Caco-2 (cell line): ENCODE measurements at regions of chr14 and their contacts with region 1.

Region 1: GRCh38 chr14:46581036-46581671 is 70.4 kb downstream of the RPL10L start:
- DNase-seq: peak; percentile 36 to 46
- H3K4me3 ChIP-seq: no peak overlapping the region
- H3K4me3 Mint-ChIP-seq: no peak overlapping the region
- H3K27ac Mint-ChIP-seq: no peak overlapping the region
- H3K4me1 ChIP-seq: no peaks in the 10 kb centered on the region
- H3K4me1 Mint-ChIP-seq: no peaks in the 10 kb centered on the region
- H3K27me3 ChIP-seq: no peaks in the 10 kb centered on the region
- H3K27me3 Mint-ChIP-seq: no peaks in the 10 kb centered on the region
- CTCF ChIP-seq: peak; percentile 67 to 70

Region 2: DNA sequence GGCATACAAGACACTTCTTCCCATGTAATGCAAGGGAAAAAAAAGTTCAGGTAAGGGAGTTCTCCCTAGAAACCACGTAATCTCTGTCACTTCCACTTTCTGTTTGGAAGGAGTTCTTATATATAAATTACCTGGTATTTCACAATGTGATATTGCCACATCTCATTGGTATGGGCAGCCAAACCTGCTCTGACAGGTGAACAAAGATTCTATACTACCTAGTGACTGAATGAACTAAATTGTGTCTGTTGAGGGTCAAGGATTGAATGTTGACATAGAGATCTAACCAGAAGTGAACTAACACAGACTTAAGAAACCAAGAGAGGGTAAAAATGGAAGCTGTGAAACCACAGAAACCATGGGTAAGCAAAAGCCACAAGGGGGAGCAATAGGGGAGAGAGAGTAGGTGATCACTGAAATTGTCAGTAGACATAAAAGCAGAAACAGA is 90.9 kb before region 1 on chr14:
- CTCF ChIA-PET with region 1: no interaction called
- POLR2A ChIA-PET with region 1: no interaction called
- intact Hi-C with region 1: loop called (anchors 5 kb)
- DNase-seq: peak in 1 of 2 experiments; percentile 50
- H3K4me3 ChIP-seq: no peak overlapping the region
- H3K4me3 Mint-ChIP-seq: no peak overlapping the region
- H3K27ac Mint-ChIP-seq: no peak overlapping the region
- H3K4me1 ChIP-seq: no peaks in the 10 kb centered on the region
- H3K4me1 Mint-ChIP-seq: peaks cover 9% of the 10 kb centered on the region
- H3K27me3 ChIP-seq: no peaks in the 10 kb centered on the region
- H3K27me3 Mint-ChIP-seq: no peaks in the 10 kb centered on the region
- CTCF ChIP-seq: peak; percentile 38 to 56

Region 3: GRCh38 chr14:46596236-46596635 is 15.1 kb after region 1 on chr14:
- CTCF ChIA-PET with region 1: no interaction called
- POLR2A ChIA-PET with region 1: no interaction called
- intact Hi-C with region 1: no loop called
- DNase-seq: no peak
- H3K4me3 ChIP-seq: no peak overlapping the region
- H3K4me3 Mint-ChIP-seq: no peak overlapping the region
- H3K27ac Mint-ChIP-seq: no peak overlapping the region
- H3K4me1 ChIP-seq: peaks cover 12% of the 10 kb centered on the region
- H3K4me1 Mint-ChIP-seq: peaks cover 9% of the 10 kb centered on the region
- H3K27me3 ChIP-seq: no peaks in the 10 kb centered on the region
- H3K27me3 Mint-ChIP-seq: peaks cover 3% of the 10 kb centered on the region
- CTCF ChIP-seq: no peak

Region 4: DNA sequence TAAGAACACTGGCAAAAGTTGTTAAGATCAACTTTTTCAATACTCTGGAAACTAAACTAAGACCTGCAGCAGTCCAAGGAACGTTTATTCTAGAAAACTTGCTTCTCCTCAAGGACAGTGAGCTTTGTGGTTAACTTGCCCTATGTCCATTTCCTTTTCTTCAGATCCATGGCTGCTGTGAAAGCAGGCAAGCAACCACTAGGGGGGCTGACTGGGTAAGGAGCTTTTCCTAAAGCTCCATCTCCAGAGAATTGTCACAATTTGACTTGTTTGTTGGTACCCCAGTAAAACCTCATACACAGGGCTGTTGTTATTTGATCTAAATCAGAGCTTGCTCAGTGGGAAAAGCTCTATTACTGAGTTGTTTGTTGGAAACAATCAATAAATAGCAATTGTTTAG is 80.6 kb after region 1 on chr14:
- CTCF ChIA-PET with region 1: no interaction called
- POLR2A ChIA-PET with region 1: no interaction called
- intact Hi-C with region 1: loop called (anchors 5 kb)
- DNase-seq: peak in 1 of 2 experiments; percentile 9
- H3K4me3 ChIP-seq: no peak overlapping the region
- H3K4me3 Mint-ChIP-seq: no peak overlapping the region
- H3K27ac Mint-ChIP-seq: no peak overlapping the region
- H3K4me1 ChIP-seq: no peaks in the 10 kb centered on the region
- H3K4me1 Mint-ChIP-seq: no peaks in the 10 kb centered on the region
- H3K27me3 ChIP-seq: no peaks in the 10 kb centered on the region
- H3K27me3 Mint-ChIP-seq: no peaks in the 10 kb centered on the region
- CTCF ChIP-seq: peak; percentile 22 to 26

Region 5: GRCh38 chr14:46920542-46920941 is 339.4 kb after region 1 on chr14:
- CTCF ChIA-PET with region 1: no interaction called
- POLR2A ChIA-PET with region 1: no interaction called
- intact Hi-C with region 1: loop called (anchors 5 kb)
- DNase-seq: no peak
- H3K4me3 ChIP-seq: no peak overlapping the region
- H3K4me3 Mint-ChIP-seq: no peak overlapping the region
- H3K27ac Mint-ChIP-seq: no peak overlapping the region
- H3K4me1 ChIP-seq: no peaks in the 10 kb centered on the region
- H3K4me1 Mint-ChIP-seq: no peaks in the 10 kb centered on the region
- H3K27me3 ChIP-seq: no peaks in the 10 kb centered on the region
- H3K27me3 Mint-ChIP-seq: no peaks in the 10 kb centered on the region
- CTCF ChIP-seq: no peak

Region 6: GRCh38 chr14:47040550-47040949 is 459.4 kb after region 1 on chr14:
- CTCF ChIA-PET with region 1: no interaction called
- POLR2A ChIA-PET with region 1: no interaction called
- intact Hi-C with region 1: loop called (anchors 1 kb)
- DNase-seq: peak in 1 of 2 experiments; percentile 34
- H3K4me3 ChIP-seq: no peak overlapping the region
- H3K4me3 Mint-ChIP-seq: no peak overlapping the region
- H3K27ac Mint-ChIP-seq: no peak overlapping the region
- H3K4me1 ChIP-seq: no peaks in the 10 kb centered on the region
- H3K4me1 Mint-ChIP-seq: peaks cover 6% of the 10 kb centered on the region
- H3K27me3 ChIP-seq: no peaks in the 10 kb centered on the region
- H3K27me3 Mint-ChIP-seq: no peaks in the 10 kb centered on the region
- CTCF ChIP-seq: peak; percentile 14 to 42

Region 7: DNA sequence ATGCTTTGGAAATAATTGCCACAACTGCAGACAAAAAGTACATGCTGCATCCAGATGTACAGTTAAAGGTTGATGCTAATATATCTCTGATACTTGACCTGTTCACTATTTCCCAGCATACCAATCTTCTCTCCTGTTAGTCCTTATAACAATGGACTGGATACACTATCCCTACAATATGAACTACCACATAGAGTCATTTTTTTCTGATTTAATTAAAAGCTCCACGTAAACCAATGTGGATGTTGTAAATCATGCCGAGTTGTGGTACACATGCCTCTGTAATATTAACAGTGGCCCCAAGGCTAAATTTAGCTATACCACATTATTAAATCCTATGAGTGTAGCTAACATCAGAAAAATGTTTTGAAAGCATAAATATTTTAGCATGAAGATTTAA is 539.5 kb after region 1 on chr14:
- CTCF ChIA-PET with region 1: no interaction called
- POLR2A ChIA-PET with region 1: no interaction called
- intact Hi-C with region 1: no loop called
- DNase-seq: no peak
- H3K4me3 ChIP-seq: no peak overlapping the region
- H3K4me3 Mint-ChIP-seq: no peak overlapping the region
- H3K27ac Mint-ChIP-seq: no peak overlapping the region
- H3K4me1 ChIP-seq: no peaks in the 10 kb centered on the region
- H3K4me1 Mint-ChIP-seq: no peaks in the 10 kb centered on the region
- H3K27me3 ChIP-seq: no peaks in the 10 kb centered on the region
- H3K27me3 Mint-ChIP-seq: no peaks in the 10 kb centered on the region
- CTCF ChIP-seq: no peak

Region 8: DNA sequence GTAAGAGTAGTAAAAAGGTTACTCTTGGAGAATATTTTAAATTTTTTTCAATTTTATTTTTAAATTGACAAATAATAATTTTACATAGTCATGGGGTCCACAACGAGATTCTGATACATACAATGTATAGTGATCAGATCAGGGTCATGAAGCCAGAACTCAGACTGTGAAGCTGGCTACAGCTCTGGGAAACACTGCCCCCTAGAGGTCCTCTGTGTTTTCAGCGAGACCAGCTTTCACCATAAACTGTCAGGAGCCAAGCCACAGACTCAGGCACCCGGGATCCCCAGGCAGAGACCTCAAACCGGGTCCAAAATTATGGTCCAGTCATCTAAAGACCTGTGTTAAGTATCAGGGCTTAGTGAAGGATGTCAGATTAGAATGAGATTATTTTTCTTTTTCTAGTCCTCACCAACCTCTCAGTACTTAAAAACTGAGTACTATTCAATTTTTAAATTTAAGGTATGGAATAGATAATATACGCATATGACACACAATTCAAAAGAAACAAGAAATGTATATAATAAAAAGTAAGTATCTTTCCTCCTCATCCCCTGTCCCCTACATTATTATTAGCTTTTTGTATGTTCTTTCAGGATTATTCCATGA is 697.2 kb after region 1 on chr14:
- CTCF ChIA-PET with region 1: no interaction called
- POLR2A ChIA-PET with region 1: no interaction called
- intact Hi-C with region 1: loop called (anchors 5 kb)
- DNase-seq: peak; percentile 47 to 70
- H3K4me3 ChIP-seq: no peak overlapping the region
- H3K4me3 Mint-ChIP-seq: no peak overlapping the region
- H3K27ac Mint-ChIP-seq: no peak overlapping the region
- H3K4me1 ChIP-seq: no peaks in the 10 kb centered on the region
- H3K4me1 Mint-ChIP-seq: no peaks in the 10 kb centered on the region
- H3K27me3 ChIP-seq: no peaks in the 10 kb centered on the region
- H3K27me3 Mint-ChIP-seq: peaks cover 3% of the 10 kb centered on the region
- CTCF ChIP-seq: peak; percentile 70 to 82